Activated CD4-positive, alpha-beta T cell treated with anti-CD3 and anti-CD28 coated beads for 36 hours (primary cell): ENCODE measurements at regions of chr22 and their contacts with region 1.

Region 1: GRCh38 chr22:23893943-23894709 is at the start of gene MIF:
- DNase-seq: peak; percentile 98
- ATAC-seq: peak; percentile 87
- H3K4me3 Mint-ChIP-seq: peak within 1 kb of the TSS; percentile 91
- H3K27ac Mint-ChIP-seq: peak within 1 kb of the TSS; percentile 98
- H3K4me1 Mint-ChIP-seq: peaks cover 23% of the 10 kb centered on the region
- H3K27me3 Mint-ChIP-seq: no peaks in the 10 kb centered on the region
- total RNA-seq, gene MIF: 1,478 to 1,739 TPM

Region 2: DNA sequence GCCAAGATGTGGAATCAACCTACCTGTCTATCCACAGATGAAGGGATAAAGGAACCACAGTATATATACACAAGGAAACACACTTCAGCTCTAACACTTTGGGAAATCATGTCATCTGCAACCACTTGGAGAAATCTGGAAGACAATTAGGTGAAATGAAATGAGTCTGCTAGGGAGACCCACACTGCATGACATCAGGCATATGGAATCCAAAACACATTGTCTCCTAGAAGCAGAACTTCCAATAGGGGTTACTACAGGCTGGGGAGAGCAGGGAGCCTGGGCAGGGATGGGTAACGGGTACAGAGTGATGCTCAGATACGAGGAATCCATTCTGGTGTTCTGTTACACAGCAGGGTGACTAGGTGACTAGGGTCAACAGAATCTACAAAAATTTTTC is 185.0 kb before region 1 on chr22:
- CTCF ChIA-PET with region 1: no interaction called
- POLR2A ChIA-PET with region 1: no interaction called
- intact Hi-C with region 1: loop called in 1 of 2 experiments (anchors 2 kb)
- DNase-seq: no peak
- ATAC-seq: no peak
- H3K4me3 Mint-ChIP-seq: no peak overlapping the region
- H3K27ac Mint-ChIP-seq: peak overlapping the region; percentile 68
- H3K4me1 Mint-ChIP-seq: peaks cover 64% of the 10 kb centered on the region
- H3K27me3 Mint-ChIP-seq: no peaks in the 10 kb centered on the region

Region 3: DNA sequence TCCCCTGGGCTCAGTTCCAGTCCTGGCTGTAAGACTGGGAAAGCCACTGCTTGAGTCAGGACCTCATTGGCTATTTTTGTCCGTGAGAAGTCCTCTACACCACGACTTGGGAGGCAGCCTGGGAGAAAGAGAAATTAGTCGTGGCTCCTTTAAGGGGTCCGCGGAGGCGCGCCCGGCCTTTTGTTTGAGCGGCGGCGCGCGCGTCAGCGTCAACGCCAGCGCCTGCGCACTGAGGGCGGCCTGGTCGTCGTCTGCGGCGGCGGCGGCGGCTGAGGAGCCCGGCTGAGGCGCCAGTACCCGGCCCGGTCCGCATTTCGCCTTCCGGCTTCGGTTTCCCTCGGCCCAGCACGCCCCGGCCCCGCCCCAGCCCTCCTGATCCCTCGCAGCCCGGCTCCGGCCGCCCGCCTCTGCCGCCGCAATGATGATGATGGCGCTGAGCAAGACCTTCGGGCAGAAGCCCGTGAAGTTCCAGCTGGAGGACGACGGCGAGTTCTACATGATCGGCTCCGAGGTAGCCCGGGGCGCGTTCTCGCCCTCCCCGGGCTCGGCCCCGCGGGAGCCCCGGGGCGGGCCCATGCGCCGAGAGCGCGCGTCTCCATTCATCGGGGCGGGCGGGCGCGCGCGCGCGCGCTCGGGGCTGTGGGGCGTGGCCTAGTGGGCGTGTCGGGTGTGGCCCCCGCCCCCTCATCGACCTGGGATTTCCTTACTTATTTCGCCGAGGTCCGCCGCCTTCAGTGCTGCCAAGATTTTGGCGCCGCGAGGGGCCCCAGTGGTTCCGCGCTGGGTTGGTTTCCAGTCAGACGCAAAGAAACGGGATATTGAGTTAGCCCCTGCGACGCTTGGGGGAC is 107.2 kb before region 1 on chr22 and contains the start of gene SMARCB1:
- CTCF ChIA-PET with region 1: interaction called, 5 read pairs
- POLR2A ChIA-PET with region 1: interaction called, 4 read pairs
- intact Hi-C with region 1: loop called (anchors 1 to 5 kb)
- DNase-seq: peak; percentile 96
- ATAC-seq: peak; percentile 81
- H3K4me3 Mint-ChIP-seq: peak within 1 kb of the TSS; percentile 84
- H3K27ac Mint-ChIP-seq: peak within 1 kb of the TSS; percentile 94
- H3K4me1 Mint-ChIP-seq: peaks cover 30% of the 10 kb centered on the region
- H3K27me3 Mint-ChIP-seq: no peaks in the 10 kb centered on the region
- total RNA-seq, gene SMARCB1: 78.2 to 95.2 TPM

Region 4: GRCh38 chr22:23857606-23858483 is 36.3 kb before region 1 on chr22 and contains the start of gene SLC2A11:
- CTCF ChIA-PET with region 1: interaction called, 23 read pairs
- POLR2A ChIA-PET with region 1: interaction called, 12 read pairs
- intact Hi-C with region 1: loop called (anchors 5 kb)
- DNase-seq: peak; percentile 97
- ATAC-seq: peak; percentile 97
- H3K4me3 Mint-ChIP-seq: peak within 1 kb of the TSS; percentile 80
- H3K27ac Mint-ChIP-seq: peak within 1 kb of the TSS; percentile 72
- H3K4me1 Mint-ChIP-seq: peaks cover 15% of the 10 kb centered on the region
- H3K27me3 Mint-ChIP-seq: no peaks in the 10 kb centered on the region
- total RNA-seq, gene SLC2A11: 7.6 to 7.7 TPM

Region 5: DNA sequence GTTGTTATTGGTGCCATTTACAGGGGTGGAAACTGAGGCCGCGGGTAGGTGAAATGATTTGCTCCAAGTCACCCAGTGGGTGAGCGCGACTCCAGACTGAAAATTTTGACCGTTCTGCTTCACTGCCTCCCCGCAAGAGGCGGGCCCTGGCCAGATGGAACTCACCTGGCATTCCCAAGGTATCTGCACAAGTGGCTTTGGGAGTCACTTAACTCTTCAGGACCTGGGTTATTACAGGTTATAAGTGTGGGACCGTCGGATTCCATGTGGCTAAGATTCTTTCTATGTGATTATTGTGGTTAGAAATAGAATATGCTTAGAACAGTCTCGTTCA is 117.6 kb after region 1 on chr22:
- CTCF ChIA-PET with region 1: interaction called, 4 read pairs
- POLR2A ChIA-PET with region 1: interaction called, 3 read pairs
- intact Hi-C with region 1: loop called in 1 of 2 experiments (anchors 1 kb)
- DNase-seq: no peak
- ATAC-seq: no peak
- H3K4me3 Mint-ChIP-seq: peak overlapping the region; percentile 92
- H3K27ac Mint-ChIP-seq: peak overlapping the region; percentile 94
- H3K4me1 Mint-ChIP-seq: peaks cover 27% of the 10 kb centered on the region
- H3K27me3 Mint-ChIP-seq: no peaks in the 10 kb centered on the region

Region 6: DNA sequence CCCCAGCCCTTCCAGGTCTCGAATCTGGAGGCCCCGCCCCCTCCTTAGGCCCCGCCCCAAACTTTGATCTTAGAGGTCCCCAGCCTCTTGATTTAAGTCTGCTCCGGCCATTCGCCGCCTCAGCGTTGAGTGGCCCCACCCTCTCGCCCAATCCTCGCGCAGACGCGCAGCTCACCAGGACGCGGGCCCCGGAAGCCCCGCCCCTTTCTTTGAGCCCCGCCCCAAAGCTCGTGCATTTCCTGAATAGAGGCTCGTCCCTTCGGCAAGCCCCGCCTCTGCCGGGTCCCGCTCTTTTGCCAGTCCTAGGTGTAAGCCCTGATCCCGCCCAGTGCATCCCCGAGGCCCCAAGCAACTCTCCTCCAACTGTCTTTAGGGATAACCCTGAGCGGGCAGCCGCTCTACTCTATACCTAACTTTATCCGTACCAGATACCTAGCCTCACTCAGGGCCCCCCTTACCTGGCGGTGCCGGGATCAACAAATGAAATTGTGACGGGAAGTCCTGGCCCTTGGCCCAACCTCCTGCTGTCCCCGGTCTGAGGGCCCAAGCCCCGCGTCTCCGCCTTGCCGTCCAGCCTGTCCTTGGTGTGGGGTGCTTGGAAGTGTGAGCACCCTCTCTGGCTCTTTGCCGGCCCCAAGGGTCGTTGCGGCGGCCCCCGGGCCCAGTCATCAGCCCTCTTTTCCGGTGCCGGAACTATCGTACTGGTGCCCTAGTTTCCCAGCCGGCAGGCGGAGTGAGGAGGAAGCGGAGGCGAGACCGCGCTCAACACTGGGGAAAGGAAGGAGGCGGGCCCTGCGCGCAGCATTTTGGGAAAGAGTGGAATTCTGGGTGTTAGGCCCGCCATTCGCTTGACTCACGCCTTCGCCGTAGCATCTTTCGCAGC is 661.3 kb after region 1 on chr22 and contains the start of gene SNRPD3:
- CTCF ChIA-PET with region 1: no interaction called
- POLR2A ChIA-PET with region 1: no interaction called
- intact Hi-C with region 1: loop called (anchors 1 to 10 kb)
- DNase-seq: peak; percentile 100
- ATAC-seq: peak; percentile 91
- H3K4me3 Mint-ChIP-seq: peak within 1 kb of the TSS; percentile 95
- H3K27ac Mint-ChIP-seq: peak within 1 kb of the TSS; percentile 99
- H3K4me1 Mint-ChIP-seq: peaks cover 53% of the 10 kb centered on the region
- H3K27me3 Mint-ChIP-seq: no peaks in the 10 kb centered on the region
- total RNA-seq, gene SNRPD3: 156 to 232 TPM